Activated naive CD4-positive, alpha-beta T cell treated with anti-CD3 and anti-CD28 coated beads for 36 hours (primary cell): ENCODE measurements at regions of chr14 and their contacts with region 1.

Region 1: DNA sequence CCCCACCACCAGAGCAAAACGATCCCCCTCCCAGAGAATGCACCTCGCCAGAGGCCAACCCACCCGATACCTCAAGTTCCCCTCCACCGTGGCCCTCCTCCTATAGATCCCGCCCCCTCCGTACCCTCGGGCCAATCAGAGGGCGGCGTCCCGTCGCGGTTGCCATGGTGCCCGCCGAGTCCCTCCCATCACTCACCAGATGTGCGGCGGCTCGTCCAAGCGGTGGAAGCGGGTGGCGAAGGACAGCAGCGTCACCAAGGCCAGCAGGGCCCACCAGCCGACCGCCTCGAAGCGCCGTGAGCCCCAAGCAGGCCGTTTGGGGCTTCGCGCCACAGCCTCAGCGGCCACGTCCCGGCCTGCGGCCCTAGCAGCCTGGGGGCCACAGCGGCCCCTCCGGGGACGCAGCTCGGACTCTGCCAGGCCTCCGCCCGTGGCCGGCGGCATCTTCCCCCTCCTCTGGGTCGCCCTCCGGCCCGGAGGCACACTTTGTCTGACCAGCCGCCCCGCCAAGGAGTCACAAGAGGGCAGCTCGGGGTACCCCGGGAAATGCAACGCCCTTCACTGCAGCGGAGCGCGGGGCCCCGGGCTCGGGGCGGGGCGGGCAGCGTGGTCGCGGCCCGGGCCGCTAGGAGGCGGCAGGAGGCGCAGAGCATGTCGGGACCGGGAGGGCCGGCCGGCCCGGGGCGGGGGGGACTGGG is at the start of gene POMT2:
- DNase-seq: peak; percentile 91
- H3K4me3 Mint-ChIP-seq: peak within 1 kb of the TSS; percentile 91
- H3K27ac Mint-ChIP-seq: peak within 1 kb of the TSS; percentile 97
- H3K4me1 Mint-ChIP-seq: peaks cover 15% of the 10 kb centered on the region
- H3K27me3 Mint-ChIP-seq: no peaks in the 10 kb centered on the region
- total RNA-seq, gene POMT2: 11.3 to 14.5 TPM

Region 2: DNA sequence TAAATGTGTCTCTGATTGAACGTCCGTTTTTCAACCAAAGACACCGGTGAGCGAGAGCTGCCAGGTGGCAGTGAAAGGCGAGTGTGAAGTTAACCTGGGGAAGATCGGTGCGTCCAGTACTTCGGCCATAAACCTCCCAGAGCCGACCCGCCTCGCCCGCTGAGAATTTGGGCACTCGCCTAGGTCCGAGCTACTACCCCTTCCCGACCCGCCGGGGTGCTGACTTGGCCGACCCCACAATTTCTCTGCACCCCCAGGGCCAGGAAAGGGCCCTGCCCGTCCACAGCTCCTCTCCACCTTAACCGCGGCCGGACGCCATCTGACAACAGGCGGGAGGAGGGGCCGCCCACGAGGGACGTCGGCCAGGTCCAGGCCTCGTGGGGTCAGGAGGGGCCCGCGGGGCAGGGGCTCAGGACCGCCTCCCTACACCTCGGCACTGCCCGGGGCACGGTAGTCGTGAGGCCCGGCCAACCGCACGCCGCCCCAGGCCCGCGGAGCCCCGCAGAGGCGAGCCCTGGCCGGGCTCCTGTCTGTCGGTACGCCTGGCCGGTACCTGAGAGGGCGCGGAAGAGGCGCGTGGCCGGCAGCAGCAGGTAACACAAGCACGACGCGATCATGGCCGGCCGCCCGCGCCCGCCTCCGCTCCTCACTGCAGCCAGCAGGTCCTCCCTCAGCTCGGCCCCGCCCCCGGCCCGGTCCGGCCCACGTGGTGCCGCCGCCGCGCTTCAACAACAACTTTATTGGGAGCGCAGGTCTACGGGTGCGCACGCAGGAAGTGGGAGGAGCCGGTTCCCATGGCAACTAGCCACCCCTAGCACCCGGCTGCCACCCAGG is 508.0 kb before region 1 on chr14 and contains the start of gene ANGEL1:
- CTCF ChIA-PET with region 1: no interaction called
- intact Hi-C with region 1: loop called (anchors 1 kb)
- DNase-seq: peak; percentile 97
- H3K4me3 Mint-ChIP-seq: peak within 1 kb of the TSS; percentile 91
- H3K27ac Mint-ChIP-seq: peak within 1 kb of the TSS; percentile 81
- H3K4me1 Mint-ChIP-seq: peaks cover 24% of the 10 kb centered on the region
- H3K27me3 Mint-ChIP-seq: no peaks in the 10 kb centered on the region
- total RNA-seq, gene ANGEL1: 17.0 to 19.8 TPM

Region 3: DNA sequence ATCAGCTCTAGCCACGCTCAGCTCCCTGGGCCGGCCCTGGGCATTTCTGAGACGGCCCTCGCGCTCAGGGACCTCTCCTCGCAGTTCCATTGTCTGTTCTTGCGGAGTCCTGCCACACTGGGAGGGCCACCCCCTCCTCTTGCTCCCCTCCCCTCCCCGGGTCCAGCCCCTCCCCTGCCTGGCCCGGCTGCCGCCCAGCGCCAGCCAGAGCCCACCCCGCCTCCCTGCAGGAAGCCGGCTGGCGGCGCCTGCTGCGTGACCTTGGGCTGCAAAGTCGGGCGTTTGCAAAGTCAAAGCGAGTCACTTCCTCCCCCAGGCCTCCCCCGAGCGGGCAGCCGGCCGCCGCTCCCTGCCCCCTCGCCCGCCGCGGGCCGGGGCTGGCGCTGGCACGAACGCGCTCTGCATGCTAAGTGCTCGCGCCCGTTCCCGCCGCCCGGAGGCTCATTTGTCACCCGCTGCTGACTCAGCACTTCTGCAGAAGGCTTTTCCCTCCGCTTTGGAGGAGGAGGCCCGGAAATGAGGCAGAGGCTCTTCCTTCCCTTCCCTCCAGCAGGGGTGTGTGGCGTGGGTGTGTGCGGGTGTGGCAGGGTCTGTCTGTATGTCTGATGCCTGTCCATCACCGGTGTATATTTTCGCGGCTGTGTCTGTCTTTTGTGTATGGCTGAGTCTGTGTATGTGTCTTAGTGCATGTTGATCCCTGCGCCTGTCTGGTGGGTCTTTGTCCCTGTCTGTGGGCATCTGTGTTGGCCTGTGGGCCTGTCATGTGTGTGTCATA is 363.9 kb before region 1 on chr14:
- CTCF ChIA-PET with region 1: no interaction called
- intact Hi-C with region 1: loop called (anchors 2 kb)
- DNase-seq: peak; percentile 98
- H3K4me3 Mint-ChIP-seq: peak overlapping the region; percentile 80
- H3K27ac Mint-ChIP-seq: peak overlapping the region; percentile 97
- H3K4me1 Mint-ChIP-seq: peaks cover 72% of the 10 kb centered on the region
- H3K27me3 Mint-ChIP-seq: no peaks in the 10 kb centered on the region

Region 4: GRCh38 chr14:77301103-77301502 is 19.3 kb before region 1 on chr14:
- CTCF ChIA-PET with region 1: interaction called, 124 read pairs
- intact Hi-C with region 1: loop called (anchors 1 kb)
- DNase-seq: peak; percentile 82
- H3K4me3 Mint-ChIP-seq: no peak overlapping the region
- H3K27ac Mint-ChIP-seq: no peak overlapping the region
- H3K4me1 Mint-ChIP-seq: peaks cover 13% of the 10 kb centered on the region
- H3K27me3 Mint-ChIP-seq: no peaks in the 10 kb centered on the region

Region 5: GRCh38 chr14:77554207-77554606 is 233.8 kb after region 1 on chr14:
- CTCF ChIA-PET with region 1: interaction called, 3 read pairs
- intact Hi-C with region 1: loop called (anchors 5 kb)
- DNase-seq: no peak
- H3K4me3 Mint-ChIP-seq: no peak overlapping the region
- H3K27ac Mint-ChIP-seq: peak overlapping the region; percentile 58
- H3K4me1 Mint-ChIP-seq: peaks cover 12% of the 10 kb centered on the region
- H3K27me3 Mint-ChIP-seq: no peaks in the 10 kb centered on the region

Region 6: GRCh38 chr14:77707724-77708408 is 387.5 kb after region 1 on chr14 and contains the starts of genes ALKBH1 and SLIRP:
- CTCF ChIA-PET with region 1: no interaction called
- intact Hi-C with region 1: loop called (anchors 1 kb)
- DNase-seq: peak; percentile 92
- H3K4me3 Mint-ChIP-seq: peak within 1 kb of the TSS; percentile 87
- H3K27ac Mint-ChIP-seq: peak within 1 kb of the TSS; percentile 88
- H3K4me1 Mint-ChIP-seq: peaks cover 48% of the 10 kb centered on the region
- H3K27me3 Mint-ChIP-seq: no peaks in the 10 kb centered on the region
- total RNA-seq, gene ALKBH1: 13.5 to 14.5 TPM
- total RNA-seq, gene SLIRP: 134 to 149 TPM